Gastrocnemius medialis (tissue), 4 donors: ENCODE measurements at regions of chr4 and their contacts with region 1.

Region 1: GRCh38 chr4:48016141-48017103 is at the starts of genes CNGA1 and NIPAL1:
- DNase-seq: peak; percentile 45 to 68
- ATAC-seq: peak; percentile 89 to 93
- H3K4me3 ChIP-seq: peak within 1 kb of the TSS; percentile 72 to 81 (median 76)
- H3K27ac ChIP-seq: peak within 1 kb of the TSS; percentile 62 to 78 (median 74)
- H3K4me1 ChIP-seq: peaks cover 0 to 4% of the 10 kb centered on the region in 2 donors
- H3K27me3 ChIP-seq: no peaks in the 10 kb centered on the region
- CTCF ChIP-seq: peak in 2 of 5 experiments; percentile 41 to 55
- POLR2A ChIP-seq: peak in 1 of 2 donors; percentile 23
- total RNA-seq, gene CNGA1: 0.15 to 0.53 (median 0.32) TPM in 3 of 4 donors, not detected in the other
- total RNA-seq, gene NIPAL1: 0.07 to 0.51 (median 0.15) TPM in 3 of 4 donors, not detected in the other

Region 2: DNA sequence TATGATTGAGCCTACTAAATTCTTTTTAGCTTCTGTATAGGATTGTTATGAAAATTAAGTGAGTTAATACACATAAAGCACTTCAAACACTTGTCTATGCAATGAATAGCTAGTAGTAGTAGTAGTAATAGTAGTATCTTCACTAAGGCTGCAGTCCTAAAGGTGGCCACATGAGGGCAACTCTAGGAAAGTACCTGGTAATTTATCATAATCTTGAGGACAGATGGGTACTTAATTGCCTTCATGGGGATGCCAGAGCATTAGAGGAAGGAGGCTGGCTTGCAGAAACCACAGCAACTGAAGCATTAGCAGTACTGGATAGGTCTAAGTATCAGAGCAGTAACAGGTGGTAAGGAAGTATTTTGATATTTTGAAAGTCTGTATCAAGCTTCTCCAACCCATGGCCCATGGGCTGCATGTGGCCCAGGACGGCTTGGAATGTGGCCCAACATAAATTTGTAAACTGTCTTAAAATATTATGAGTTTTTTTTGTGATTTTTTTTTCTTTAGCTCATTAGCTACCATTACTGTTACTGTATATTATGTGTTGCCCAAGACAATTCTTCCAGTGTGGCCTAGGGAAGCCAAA is 17.5 kb after region 1 on chr4:
- in situ Hi-C with region 1: no loop called
- intact Hi-C with region 1: loop called (anchors 2 kb)
- DNase-seq: no peak
- ATAC-seq: no peak
- H3K4me3 ChIP-seq: no peak overlapping the region
- H3K27ac ChIP-seq: no peak overlapping the region
- H3K4me1 ChIP-seq: peaks cover 19 to 20% of the 10 kb centered on the region in 2 donors
- H3K27me3 ChIP-seq: no peaks in the 10 kb centered on the region
- CTCF ChIP-seq: peak in 3 of 5 experiments; percentile 14 to 19 (median 17)
- POLR2A ChIP-seq: no peak

Region 3: GRCh38 chr4:48042979-48043461 is 26.6 kb after region 1 on chr4:
- in situ Hi-C with region 1: no loop called
- intact Hi-C with region 1: loop called (anchors 2 kb)
- DNase-seq: no peak
- ATAC-seq: no peak
- H3K4me3 ChIP-seq: no peak overlapping the region
- H3K27ac ChIP-seq: peak overlapping the region in 2 of 4 donors; percentile 23 to 30
- H3K4me1 ChIP-seq: peaks cover 27 to 30% of the 10 kb centered on the region in 2 donors
- H3K27me3 ChIP-seq: no peaks in the 10 kb centered on the region
- CTCF ChIP-seq: no peak
- POLR2A ChIP-seq: no peak